Mammary epithelial cell (primary cell): ENCODE measurements at regions of chr4 and their contacts with region 1.

Region 1: DNA sequence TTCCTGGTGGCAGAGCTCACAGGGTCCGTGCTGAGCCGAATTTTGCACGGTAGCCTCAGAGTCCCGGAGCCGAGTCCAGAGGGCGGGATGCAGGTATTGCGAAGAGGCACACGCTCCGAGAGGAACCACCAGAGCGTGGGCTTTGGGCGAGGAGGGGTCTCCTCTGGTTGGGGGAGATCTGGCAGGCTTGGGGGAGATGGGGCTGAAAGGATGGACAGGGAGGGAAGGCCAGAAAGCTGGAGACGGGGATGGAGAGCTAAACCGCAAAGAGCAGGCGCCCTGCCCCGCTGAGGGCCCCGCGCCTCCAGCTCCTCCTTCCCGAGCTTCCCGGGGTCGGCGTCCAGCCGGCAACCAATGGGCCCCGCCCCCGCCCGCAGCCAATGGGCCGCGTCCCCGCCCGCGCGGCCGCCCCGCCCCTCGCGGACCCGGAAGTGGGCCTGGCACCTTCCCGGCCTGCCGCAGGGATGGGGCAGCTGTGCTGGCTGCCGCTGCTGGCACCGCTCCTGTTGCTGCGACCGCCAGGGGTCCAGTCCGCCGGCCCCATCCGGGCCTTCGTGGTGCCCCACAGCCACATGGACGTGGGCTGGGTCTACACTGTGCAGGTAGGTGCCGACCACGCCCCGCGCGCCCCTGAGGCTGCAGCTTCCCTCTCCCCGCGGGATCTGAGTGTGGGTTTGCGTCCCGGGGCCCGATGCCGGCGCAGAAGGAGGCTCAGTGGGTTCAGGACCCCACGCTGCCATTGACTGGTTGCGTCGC is at the start of gene MAN2B2:
- DNase-seq: peak; percentile 72
- H3K4me3 ChIP-seq: peak within 1 kb of the TSS; percentile 87 to 97 (median 91)
- H3K27ac ChIP-seq: no peak within 1 kb of the TSS
- H3K4me1 ChIP-seq: peaks cover 16% of the 10 kb centered on the region
- H3K27me3 ChIP-seq: no peaks in the 10 kb centered on the region
- CTCF ChIP-seq: no peak
- total RNA-seq, gene MAN2B2: 21.3 to 34.7 TPM

Region 2: DNA sequence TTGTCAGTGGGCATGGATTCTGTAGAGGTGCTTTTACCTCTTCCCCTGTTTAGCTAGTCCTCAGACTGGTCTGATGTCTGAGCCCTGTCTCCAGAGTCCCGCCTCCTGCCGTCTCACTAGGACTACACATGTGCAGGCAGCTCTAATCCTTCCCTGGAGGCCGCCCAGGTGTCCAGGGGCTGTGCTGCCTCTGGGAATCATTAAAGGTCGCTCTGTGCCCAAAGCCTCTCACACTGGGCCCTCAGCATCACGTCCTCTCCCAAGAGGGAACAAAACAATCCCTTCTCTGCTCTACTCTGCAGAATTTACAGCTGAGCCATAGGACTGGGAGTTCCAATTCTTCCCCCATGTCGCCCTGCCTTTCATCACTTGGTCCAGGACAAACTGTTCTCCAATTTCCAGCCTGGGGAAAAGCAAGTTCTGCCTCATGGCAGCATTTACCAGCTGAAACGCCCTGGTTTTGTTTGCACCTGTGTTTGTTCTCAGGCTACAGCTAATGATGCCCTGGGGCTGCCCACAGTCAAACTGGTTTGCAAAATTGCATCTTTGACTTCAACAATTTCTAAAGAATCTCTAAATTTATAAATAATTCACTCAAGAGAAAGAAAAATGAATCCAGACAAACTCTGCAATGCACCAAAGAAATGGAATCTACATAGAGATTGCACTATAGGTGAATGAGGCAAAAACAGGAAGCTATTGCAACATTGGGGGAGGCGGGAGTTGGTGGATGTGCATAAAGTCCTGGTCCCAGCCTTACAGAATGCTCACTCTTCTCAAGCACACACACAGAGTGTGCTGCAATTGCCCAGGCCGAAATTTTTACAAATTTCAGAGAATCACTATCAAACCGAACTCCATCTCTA is 58.3 kb after region 1 on chr4:
- CTCF ChIA-PET with region 1: no interaction called
- dilution Hi-C with region 1: no loop called
- in situ Hi-C with region 1: no loop called
- intact Hi-C with region 1: no loop called
- DNase-seq: no peak
- H3K4me3 ChIP-seq: no peak overlapping the region
- H3K27ac ChIP-seq: no peak overlapping the region
- H3K4me1 ChIP-seq: no peaks in the 10 kb centered on the region
- H3K27me3 ChIP-seq: no peaks in the 10 kb centered on the region
- CTCF ChIP-seq: no peak

Region 3: DNA sequence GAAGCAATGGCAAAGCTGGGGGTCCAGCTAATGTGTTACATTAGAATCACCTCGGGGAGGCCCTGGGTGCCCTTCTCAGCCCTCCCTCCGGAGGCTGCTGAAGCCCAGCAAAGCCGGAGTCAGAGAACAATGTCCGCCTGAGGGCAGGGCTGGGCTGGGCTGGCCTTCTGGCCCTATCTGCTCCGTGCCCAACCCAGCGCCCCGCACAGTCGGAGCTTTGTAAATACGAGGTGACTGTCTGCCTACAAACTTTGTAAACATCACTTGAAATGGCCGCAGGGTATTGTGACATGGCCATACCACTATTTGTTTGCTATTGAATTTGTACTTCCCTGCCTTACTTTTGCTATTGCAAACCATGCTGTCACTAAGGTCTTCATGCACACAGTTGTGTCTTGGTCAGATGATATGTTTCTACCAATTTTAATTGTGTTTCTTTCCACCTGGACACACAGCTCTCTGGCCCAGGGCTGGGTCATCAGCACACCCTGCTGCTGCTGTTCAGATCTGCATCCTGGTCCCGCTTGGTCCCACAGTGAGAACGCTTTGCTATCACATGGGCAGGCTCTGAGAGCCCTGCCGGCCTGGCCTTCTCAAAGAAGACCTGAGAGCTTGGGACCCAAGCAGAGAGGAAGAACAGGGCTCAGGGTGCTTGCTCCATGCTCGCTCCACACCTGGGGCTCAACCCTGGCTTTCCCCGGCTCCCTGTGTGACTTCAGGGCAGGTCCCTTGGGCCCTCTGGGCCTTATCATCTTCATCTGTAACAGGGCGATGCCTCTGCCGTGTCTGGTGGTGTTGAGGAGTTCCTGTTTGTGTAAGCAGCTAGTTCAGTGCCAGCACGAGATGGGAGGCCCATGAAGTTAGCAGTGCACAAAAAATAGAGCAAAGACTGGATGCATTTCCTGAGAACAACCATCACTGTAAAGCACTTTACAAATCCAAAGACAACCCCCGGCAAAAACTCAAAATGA is 121.0 kb after region 1 on chr4:
- CTCF ChIA-PET with region 1: no interaction called
- dilution Hi-C with region 1: no loop called
- in situ Hi-C with region 1: no loop called
- intact Hi-C with region 1: loop called (anchors 10 kb)
- DNase-seq: peak; percentile 19
- H3K4me3 ChIP-seq: peak overlapping the region in 1 of 3 experiments; percentile 0
- H3K27ac ChIP-seq: peak overlapping the region; percentile 62
- H3K4me1 ChIP-seq: peaks cover 21% of the 10 kb centered on the region
- H3K27me3 ChIP-seq: no peaks in the 10 kb centered on the region
- CTCF ChIP-seq: peak; percentile 11 to 30